Left cardiac atrium (tissue), 4 donors: ENCODE measurements at regions of chr15 and their contacts with region 1.

Region 1: DNA sequence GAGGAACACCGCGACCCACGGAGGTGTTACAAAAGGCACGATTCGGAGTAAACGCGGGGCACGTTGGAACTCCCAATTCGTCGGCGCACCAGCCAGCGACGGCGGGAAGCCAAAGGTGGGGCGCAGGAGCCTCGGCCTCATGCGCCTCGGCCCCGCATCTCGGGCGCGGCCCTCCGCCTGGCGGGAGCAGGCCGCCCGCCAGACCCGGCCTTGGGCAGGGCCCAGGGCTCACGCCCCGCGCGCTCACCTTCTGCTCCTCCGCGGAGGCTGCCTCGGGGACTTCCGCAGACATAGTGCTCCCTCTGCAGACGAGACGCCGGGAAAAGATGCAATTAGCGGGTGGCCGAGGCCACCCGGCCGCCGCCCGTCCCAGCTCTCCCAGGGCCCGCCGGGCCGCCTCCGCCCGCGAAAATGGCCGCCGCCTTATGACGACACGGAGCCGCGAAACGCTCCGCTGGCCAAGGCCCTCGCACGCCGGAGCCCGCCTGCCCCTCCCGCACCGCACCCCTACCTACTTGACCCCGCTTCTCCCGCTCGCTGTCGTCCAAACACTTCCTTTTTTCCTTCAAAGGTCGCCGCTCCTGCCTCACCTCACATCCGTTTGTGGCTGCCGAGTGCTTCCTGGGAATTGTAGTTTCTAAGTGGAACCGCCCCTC is at the start of gene ARPP19:
- DNase-seq: peak; percentile 91
- ATAC-seq: peak; percentile 91 to 94
- total RNA-seq, gene ARPP19: 138 to 153 TPM

Region 2: GRCh38 chr15:52288051-52288942 is 280.4 kb before region 1 on chr15:
- intact Hi-C with region 1: no loop called
- DNase-seq: no peak
- ATAC-seq: peak in 1 of 2 donors; percentile 60

Region 3: DNA sequence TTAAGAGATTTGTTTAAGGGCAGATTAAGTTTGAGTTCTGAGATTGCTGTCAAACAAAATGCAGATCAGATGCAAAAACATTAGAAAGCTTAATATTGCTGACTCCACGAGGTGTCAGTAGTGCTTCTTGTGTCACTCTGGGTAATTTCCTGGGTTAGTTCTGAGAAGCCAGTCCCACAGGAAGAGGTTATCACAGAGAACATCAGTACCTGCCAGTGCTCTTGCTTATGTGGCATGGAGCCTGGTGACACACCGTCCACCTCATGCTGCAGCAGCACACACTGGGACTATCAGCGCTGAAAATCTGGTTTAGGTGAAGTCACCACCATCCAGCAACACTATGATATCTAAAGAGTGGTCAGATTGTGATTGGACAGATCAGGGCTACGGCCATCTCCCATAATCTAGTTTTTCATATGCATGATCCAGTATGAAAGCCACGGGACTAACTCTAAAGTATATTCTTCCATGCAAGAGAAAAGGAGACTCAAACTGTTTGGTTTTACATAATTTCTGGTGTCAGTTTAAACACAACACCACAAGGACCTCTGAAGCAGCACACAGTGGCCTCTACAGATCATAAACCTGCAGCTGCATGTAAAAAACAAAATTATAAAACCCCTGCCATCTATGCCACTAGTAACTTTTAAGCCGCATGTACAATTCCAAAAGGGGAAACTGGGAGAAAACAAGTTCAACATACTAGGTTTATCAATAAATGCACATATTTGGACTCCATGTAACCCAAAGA is 237.1 kb before region 1 on chr15:
- intact Hi-C with region 1: loop called in 1 of 2 experiments (anchors 10 kb)
- DNase-seq: no peak
- ATAC-seq: peak; percentile 60 to 88

Region 4: DNA sequence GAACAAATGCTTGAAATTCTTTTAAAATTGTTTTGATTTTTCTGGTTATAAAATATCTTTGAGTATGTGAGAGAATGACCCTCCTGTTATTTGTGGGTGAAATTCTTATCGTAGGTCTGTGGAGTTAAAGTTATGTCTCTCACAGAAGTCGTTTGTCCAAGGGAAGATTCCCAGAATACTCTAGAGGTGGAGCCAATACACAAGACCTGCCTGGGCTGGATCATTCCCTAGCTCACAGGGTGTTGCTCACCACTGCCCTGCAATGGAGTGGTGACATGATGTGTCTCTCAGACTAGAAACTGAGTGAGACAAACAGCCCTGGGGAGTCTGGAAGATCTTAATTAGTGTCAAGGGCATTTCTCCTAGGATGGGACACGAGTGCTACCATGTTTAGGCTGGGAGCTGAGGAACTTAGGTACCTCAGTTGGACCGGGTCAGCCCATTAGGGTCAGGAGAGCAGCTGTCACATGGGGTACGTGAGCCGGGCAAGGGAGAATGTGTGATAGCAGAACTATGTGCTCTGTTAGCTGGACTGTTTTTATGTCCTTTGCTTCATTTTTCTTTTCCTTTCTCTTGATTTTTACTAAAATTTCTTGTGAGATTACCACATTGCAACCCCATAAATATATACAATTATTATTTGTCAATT is 219.6 kb before region 1 on chr15:
- intact Hi-C with region 1: loop called in 1 of 2 experiments (anchors 10 kb)
- DNase-seq: no peak
- ATAC-seq: peak; percentile 39 to 61